ENCODE measurements at regions of chr22 and their contacts with region 1.

Region 1: GRCh38 chr22:27299181-27300085 is 502.1 kb downstream of the MN1 start:
- DNase-seq: peak in 1 of 5 donors; percentile 16
- ATAC-seq: peak in 2 of 4 donors; percentile 58 to 61
- H3K4me3 ChIP-seq: peak overlapping the region in 8 of 12 donors; percentile 11 to 49 (median 22)
- H3K27ac ChIP-seq: peak overlapping the region in 5 of 12 donors; percentile 32 to 67 (median 53)
- H3K4me1 ChIP-seq: peaks cover 0 to 16% (median 0%) of the 10 kb centered on the region in 12 donors
- H3K27me3 ChIP-seq: peaks cover 4 to 56% (median 27%) of the 10 kb centered on the region in 9 donors
- CTCF ChIP-seq: no peak
- POLR2A ChIP-seq: no peak

Region 2: DNA sequence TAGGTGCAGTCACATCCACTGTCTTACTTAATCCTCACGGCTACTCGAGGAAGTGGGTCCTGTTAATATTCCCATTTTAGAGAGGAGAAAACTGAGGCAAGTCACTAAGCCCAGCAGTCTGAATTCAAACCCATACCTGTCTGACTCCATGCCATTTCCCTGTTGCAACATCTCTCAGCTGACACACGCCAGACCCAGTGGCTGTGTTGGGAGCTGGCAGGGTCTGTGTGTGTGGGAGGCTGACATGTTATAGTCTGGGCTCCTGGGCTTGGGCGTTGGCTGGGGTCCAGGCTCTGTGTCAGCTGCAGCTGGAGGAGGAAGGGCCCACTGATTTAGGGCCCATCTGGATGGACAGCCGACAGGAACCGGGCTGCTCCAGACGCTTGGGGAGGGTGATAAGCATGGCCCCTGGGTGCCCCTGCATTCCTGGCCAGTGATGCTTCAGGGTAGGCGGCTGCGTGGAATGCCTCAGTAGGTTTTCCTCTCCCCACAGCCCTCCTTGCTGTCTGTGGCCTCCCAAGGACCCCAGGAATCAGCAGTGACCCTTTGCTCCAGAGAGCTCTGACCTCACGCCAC is 60.4 kb before region 1 on chr22:
- intact Hi-C with region 1: loop called in 1 of 10 experiments (anchors 5 kb)
- DNase-seq: peak; percentile 87 to 91 (median 88)
- ATAC-seq: peak; percentile 77 to 97 (median 91)
- H3K4me3 ChIP-seq: no peak overlapping the region
- H3K27ac ChIP-seq: peak overlapping the region in 6 of 12 donors; percentile 24 to 72 (median 59)
- H3K4me1 ChIP-seq: peaks cover 0 to 29% (median 2%) of the 10 kb centered on the region in 12 donors
- H3K27me3 ChIP-seq: peaks cover 0 to 3% (median 0%) of the 10 kb centered on the region in 9 donors
- CTCF ChIP-seq: no peak
- POLR2A ChIP-seq: no peak

Region 3: GRCh38 chr22:27372969-27373670 is 73.7 kb after region 1 on chr22:
- intact Hi-C with region 1: loop called in 1 of 10 experiments (anchors 10 kb)
- DNase-seq: no peak
- ATAC-seq: no peak
- H3K4me3 ChIP-seq: no peak overlapping the region
- H3K27ac ChIP-seq: no peak overlapping the region
- H3K4me1 ChIP-seq: no peaks in the 10 kb centered on the region
- H3K27me3 ChIP-seq: peaks cover 0 to 22% (median 4%) of the 10 kb centered on the region in 9 donors
- CTCF ChIP-seq: no peak
- POLR2A ChIP-seq: no peak

Measured in heart left ventricle (tissue), 16 donors.